Naive thymus-derived CD4-positive, alpha-beta T cell (primary cell): ENCODE measurements at regions of chr4 and their contacts with region 1.

Region 1: DNA sequence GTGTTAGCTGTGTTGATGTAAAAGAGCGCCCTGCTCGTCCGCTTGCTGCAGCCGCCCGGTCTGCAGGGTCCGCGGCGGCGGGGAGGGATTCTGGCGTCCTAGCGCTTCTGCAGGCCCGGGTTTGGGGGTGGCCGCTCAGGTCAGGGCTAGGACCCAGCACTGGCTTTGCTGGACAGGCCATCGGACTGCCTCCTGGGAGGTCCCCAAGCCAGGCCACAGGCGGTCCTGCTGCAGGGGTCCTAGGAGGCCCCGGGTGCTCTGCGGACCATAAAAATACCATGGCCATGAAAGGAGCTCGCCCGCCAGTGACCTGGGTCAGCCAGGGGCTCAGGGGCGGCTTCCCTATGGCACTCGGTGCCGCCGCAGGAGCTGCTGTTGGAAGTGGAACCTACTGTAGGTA is 308.6 kb downstream of the DCTD start:
- DNase-seq: no peak
- ATAC-seq: no peak
- H3K4me3 ChIP-seq: no peak overlapping the region
- H3K4me3 Mint-ChIP-seq: no peak overlapping the region
- H3K27ac ChIP-seq: no peak overlapping the region
- H3K27ac Mint-ChIP-seq: no peak overlapping the region
- H3K4me1 ChIP-seq: no peaks in the 10 kb centered on the region
- H3K4me1 Mint-ChIP-seq: no peaks in the 10 kb centered on the region
- H3K27me3 ChIP-seq: no peaks in the 10 kb centered on the region
- H3K27me3 Mint-ChIP-seq: peaks cover 0 to 10% (median 6%) of the 10 kb centered on the region in 5 donors

Region 2: GRCh38 chr4:182619660-182620059 is 11.1 kb after region 1 on chr4:
- CTCF ChIA-PET with region 1: interaction called, 5 read pairs
- POLR2A ChIA-PET with region 1: no interaction called
- intact Hi-C with region 1: loop called in 1 of 2 experiments (anchors 1 kb)
- DNase-seq: no peak
- ATAC-seq: no peak
- H3K4me3 ChIP-seq: no peak overlapping the region
- H3K4me3 Mint-ChIP-seq: no peak overlapping the region
- H3K27ac ChIP-seq: no peak overlapping the region
- H3K27ac Mint-ChIP-seq: no peak overlapping the region
- H3K4me1 ChIP-seq: no peaks in the 10 kb centered on the region
- H3K4me1 Mint-ChIP-seq: no peaks in the 10 kb centered on the region
- H3K27me3 ChIP-seq: no peaks in the 10 kb centered on the region
- H3K27me3 Mint-ChIP-seq: peaks cover 0 to 12% (median 6%) of the 10 kb centered on the region in 5 donors